ENCODE measurements at regions of chr1 and their contacts with region 1.

Region 1: DNA sequence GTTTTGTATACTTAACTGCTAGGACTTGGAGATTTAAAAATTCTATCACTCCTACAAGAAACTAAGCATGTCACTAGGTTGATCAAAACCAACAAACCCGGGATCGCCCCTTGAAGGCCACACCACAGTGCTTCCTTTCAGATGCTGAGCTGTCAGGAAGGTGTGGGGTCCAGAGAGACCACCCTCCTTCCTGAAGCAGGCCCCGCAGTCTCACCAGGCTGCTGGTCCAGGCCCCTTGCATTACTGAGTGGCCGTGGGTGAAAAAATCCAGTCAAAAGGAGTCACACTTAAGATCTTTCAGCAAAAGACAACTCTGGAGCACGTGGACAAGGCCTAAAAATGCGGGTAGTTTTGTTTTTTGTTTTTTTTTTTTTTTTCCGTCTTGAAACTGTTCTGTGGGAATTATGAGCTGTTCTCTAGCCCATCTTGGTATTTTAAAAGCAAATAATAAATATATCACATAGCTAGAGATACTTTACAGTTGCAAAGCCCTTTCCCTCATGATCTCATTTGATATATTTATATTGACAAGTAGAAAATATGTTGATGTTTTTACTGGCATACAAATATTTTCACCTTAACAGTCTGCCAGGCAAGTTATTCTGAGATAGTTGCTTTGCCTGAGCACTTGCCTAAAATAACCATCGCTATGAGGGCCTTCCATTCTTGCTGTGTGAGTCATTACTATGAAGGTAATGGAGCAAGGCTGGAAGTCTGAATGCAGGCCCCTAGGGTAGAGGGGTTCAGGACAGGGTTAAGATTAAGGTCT is 73.1 kb upstream of the EDEM3 start:
- DNase-seq: no peak
- ATAC-seq: no peak
- H3K4me3 ChIP-seq: no peak overlapping the region
- H3K4me3 Mint-ChIP-seq: no peak overlapping the region
- H3K27ac ChIP-seq: no peak overlapping the region
- H3K27ac Mint-ChIP-seq: no peak overlapping the region
- H3K4me1 ChIP-seq: no peaks in the 10 kb centered on the region
- H3K4me1 Mint-ChIP-seq: no peaks in the 10 kb centered on the region
- H3K27me3 ChIP-seq: no peaks in the 10 kb centered on the region
- H3K27me3 Mint-ChIP-seq: no peaks in the 10 kb centered on the region

Region 2: DNA sequence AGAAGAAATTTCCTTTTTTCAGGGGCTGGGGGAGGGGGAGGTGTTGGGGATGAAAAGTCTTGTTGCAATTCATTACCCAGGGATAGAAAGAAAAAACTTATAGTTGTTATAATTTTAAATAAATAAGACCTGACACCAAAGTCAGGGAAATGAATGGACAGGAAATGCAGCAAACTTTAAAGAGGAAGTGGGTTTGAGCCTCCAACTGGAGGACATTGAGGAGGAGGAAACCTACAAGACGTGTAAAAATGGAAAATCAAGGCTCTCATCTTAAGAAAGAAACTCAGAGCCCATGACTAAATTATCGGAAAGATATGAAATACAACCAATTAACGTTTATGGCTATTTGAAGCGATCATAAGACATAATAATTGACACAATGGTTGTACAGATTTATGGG is 92.1 kb after region 1 on chr1:
- CTCF ChIA-PET with region 1: no interaction called
- POLR2A ChIA-PET with region 1: no interaction called
- DNase-seq: no peak
- ATAC-seq: no peak
- H3K4me3 ChIP-seq: no peak overlapping the region
- H3K4me3 Mint-ChIP-seq: no peak overlapping the region
- H3K27ac ChIP-seq: no peak overlapping the region
- H3K27ac Mint-ChIP-seq: no peak overlapping the region
- H3K4me1 ChIP-seq: no peaks in the 10 kb centered on the region
- H3K4me1 Mint-ChIP-seq: peaks cover 4 to 34% (median 17%) of the 10 kb centered on the region in 3 donors
- H3K27me3 ChIP-seq: no peaks in the 10 kb centered on the region
- H3K27me3 Mint-ChIP-seq: no peaks in the 10 kb centered on the region

Region 3: DNA sequence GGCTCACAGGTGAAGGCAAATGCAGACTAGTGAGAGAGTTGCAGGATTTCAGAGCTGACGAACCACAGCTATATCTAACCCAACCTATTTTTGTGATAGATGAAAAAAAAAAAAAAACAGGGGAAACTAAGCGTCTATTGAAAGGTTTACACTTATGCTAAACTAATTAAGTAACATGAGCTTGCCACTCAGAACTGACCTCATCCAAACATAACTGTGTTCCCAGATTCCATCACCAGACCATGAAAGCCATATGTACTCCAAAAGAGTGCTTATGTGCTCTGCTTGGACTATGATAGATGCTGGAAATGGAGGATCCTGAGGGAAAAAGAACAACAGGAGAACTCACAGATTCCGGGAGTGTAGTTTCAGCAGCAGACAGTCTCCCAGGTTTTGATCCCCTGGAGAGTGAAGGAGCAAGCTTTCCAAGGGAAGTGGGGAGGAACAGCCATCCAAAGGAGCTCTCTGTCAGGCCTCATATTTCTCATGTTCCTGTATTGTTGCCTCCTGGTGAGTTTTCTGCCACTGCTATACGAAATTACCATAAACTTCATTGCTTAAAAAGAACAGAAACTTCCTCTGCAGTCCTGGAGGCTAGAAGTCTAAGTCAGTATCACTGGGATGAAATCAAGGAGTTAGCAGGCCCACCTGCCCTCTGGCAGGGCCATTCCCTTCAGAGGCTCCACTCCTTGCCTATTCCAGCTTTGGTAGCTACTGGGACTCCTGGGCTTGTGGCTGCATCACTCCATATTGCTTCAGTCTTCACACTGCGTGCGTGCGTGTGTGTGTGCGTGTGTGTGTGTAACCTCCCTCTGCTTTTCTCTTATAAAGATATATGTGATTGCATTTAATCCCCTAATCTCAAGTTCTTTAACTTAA is 108.4 kb after region 1 on chr1:
- CTCF ChIA-PET with region 1: no interaction called
- POLR2A ChIA-PET with region 1: interaction called in 1 of 2 experiments, 12 read pairs
- DNase-seq: no peak
- ATAC-seq: no peak
- H3K4me3 ChIP-seq: no peak overlapping the region
- H3K4me3 Mint-ChIP-seq: no peak overlapping the region
- H3K27ac ChIP-seq: no peak overlapping the region
- H3K27ac Mint-ChIP-seq: no peak overlapping the region
- H3K4me1 ChIP-seq: peaks cover 0 to under 1% of the 10 kb centered on the region in 2 experiments
- H3K4me1 Mint-ChIP-seq: peaks cover 0 to 25% (median 16%) of the 10 kb centered on the region in 3 donors
- H3K27me3 ChIP-seq: no peaks in the 10 kb centered on the region
- H3K27me3 Mint-ChIP-seq: no peaks in the 10 kb centered on the region

Region 4: GRCh38 chr1:184945029-184945428 is 117.2 kb after region 1 on chr1:
- CTCF ChIA-PET with region 1: no interaction called
- POLR2A ChIA-PET with region 1: interaction called in 1 of 2 experiments, 10 read pairs
- DNase-seq: no peak
- ATAC-seq: no peak
- H3K4me3 ChIP-seq: no peak overlapping the region
- H3K4me3 Mint-ChIP-seq: no peak overlapping the region
- H3K27ac ChIP-seq: no peak overlapping the region
- H3K27ac Mint-ChIP-seq: no peak overlapping the region
- H3K4me1 ChIP-seq: no peaks in the 10 kb centered on the region
- H3K4me1 Mint-ChIP-seq: peaks cover 0 to 28% (median 10%) of the 10 kb centered on the region in 3 donors
- H3K27me3 ChIP-seq: no peaks in the 10 kb centered on the region
- H3K27me3 Mint-ChIP-seq: no peaks in the 10 kb centered on the region

Region 5: DNA sequence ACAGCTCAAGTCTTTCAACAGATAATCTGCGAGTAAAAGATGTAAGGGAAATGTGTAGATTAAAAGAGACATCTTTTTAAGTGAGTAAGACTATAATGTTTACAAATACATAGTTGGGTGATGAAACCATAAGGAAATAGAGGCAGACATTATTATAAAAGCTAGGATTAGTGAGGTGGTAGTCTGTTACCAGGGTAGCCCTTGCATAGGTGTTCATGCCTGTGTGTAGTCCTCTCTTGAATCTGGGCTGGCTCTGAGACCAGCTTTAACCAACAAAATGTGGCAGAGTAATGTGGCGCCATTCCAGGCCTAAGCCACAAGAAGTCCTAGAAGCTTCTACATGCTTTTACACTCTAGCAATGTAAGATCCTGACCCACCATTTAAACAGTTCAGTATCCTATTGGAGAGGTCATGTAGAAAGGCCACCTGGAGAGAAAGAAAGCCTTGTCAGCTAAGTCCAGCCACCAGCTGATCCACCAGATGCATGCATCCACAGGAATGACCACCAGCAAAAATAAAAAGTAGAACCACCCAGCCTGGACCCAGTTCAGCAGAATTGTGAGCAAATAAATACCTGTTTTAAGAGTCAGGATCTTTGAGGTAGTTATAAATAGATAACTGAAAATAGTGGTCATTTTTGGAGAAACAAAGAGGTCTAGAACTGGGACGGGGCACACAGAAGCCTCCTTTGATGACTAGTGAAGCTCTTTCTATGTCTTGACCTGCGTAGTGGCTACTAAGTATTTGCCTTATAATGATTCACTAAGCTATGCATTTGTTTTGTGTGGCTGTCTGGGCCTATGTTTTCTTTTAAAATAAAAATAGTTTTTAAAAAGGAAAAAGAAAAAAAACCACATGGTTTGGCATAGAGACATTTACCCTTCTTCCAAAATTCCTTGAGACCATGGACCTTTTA is 138.4 kb after region 1 on chr1:
- CTCF ChIA-PET with region 1: no interaction called
- POLR2A ChIA-PET with region 1: no interaction called
- DNase-seq: no peak
- ATAC-seq: no peak
- H3K4me3 ChIP-seq: no peak overlapping the region
- H3K4me3 Mint-ChIP-seq: no peak overlapping the region
- H3K27ac ChIP-seq: no peak overlapping the region
- H3K27ac Mint-ChIP-seq: peak overlapping the region in 1 of 2 donors; percentile 11
- H3K4me1 ChIP-seq: peaks cover 0 to 15% of the 10 kb centered on the region in 2 experiments
- H3K4me1 Mint-ChIP-seq: peaks cover 0 to 42% (median 36%) of the 10 kb centered on the region in 3 donors
- H3K27me3 ChIP-seq: no peaks in the 10 kb centered on the region
- H3K27me3 Mint-ChIP-seq: no peaks in the 10 kb centered on the region